ENCODE measurements at regions of chrX and their contacts with region 1.

Region 1: DNA sequence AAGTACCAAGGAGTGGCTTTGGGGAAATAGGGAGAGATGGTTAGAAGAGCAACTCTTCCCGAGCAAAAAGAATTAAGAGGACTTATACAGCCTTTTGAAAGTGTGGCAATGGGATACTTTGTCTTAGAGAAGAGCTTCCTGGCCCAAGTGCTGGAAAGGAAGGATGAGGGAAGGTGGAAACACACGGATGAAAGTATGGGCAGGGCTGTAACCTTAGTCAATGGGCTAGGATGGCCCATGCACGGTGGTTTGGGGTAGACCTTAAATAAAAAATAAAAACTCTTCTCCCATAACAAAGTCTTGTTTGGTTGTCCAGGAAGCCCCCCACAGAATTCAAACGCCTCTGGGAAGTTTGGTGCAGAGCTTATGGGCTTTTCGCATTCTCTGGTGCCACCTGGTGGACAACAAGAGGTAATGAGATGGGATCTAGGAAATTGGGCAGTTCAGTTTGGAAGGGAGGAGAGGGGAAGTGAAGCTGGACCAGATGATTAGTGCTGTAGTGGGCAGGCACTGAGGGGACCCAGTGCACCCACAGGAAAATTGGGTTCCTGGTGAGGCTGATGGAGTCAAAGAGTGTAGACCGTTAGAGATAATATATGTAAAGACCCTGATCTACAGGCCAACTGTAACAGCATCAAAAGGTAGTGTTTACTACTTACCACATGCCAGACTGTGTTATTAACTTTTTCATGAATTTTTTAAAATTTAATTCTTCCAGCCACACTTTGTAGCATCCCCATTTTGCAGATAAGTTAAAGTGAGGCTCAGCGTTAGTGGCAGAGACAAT is 13.8 kb upstream of the ENOX2 start:
- DNase-seq: no peak
- ATAC-seq: peak; percentile 89
- H3K4me3 ChIP-seq: no peak overlapping the region
- H3K27ac ChIP-seq: no peak overlapping the region
- H3K4me1 ChIP-seq: no peaks in the 10 kb centered on the region
- H3K27me3 ChIP-seq: no peaks in the 10 kb centered on the region
- CTCF ChIP-seq: peak; percentile 68 to 79 (median 78)
- EP300 ChIP-seq: no peak
- POLR2A ChIP-seq: no peak
- RAD21 ChIP-seq: peak; percentile 99

Region 2: DNA sequence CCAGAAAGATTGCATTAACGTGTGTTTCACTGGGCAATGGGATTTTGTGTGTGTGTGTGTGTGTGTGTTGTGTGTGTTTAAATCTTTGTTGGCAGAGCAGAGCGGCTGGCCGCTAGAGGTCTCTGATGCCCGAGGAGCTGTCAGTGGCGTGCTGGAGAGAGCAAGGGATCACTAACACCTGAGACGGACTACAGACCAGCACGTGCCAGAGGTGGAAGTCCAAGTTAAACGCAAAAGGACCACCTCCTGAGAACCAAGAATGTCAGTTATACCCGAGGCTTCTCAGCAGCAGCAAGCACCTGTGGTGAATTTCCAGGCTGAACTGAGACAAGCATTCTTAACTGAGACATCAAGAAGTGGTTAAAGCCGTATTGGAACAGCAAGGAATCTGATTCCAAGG is 586.1 kb before region 1 on chrX:
- CTCF ChIA-PET with region 1: interaction called, 5 read pairs
- POLR2A ChIA-PET with region 1: no interaction called
- RAD21 ChIA-PET with region 1: interaction called, 3 read pairs
- SMC1A ChIA-PET with region 1: interaction called, 3 read pairs
- in situ Hi-C with region 1: loop called (anchors 5 kb)
- intact Hi-C with region 1: loop called (anchors 1 kb)
- DNase-seq: peak; percentile 5
- ATAC-seq: peak; percentile 95
- H3K4me3 ChIP-seq: no peak overlapping the region
- H3K27ac ChIP-seq: no peak overlapping the region
- H3K4me1 ChIP-seq: no peaks in the 10 kb centered on the region
- H3K27me3 ChIP-seq: no peaks in the 10 kb centered on the region
- CTCF ChIP-seq: peak; percentile 65 to 68 (median 66)
- EP300 ChIP-seq: no peak
- POLR2A ChIP-seq: no peak
- RAD21 ChIP-seq: peak; percentile 64

Region 3: GRCh38 chrX:130393451-130394074 is 523.3 kb before region 1 on chrX:
- CTCF ChIA-PET with region 1: interaction called, 3 read pairs
- POLR2A ChIA-PET with region 1: no interaction called
- RAD21 ChIA-PET with region 1: interaction called, 3 read pairs
- SMC1A ChIA-PET with region 1: interaction called, 3 read pairs
- in situ Hi-C with region 1: no loop called
- intact Hi-C with region 1: loop called (anchors 2 kb)
- DNase-seq: no peak
- ATAC-seq: peak; percentile 28; the same call in 1 of the 3 replicates
- H3K4me3 ChIP-seq: no peak overlapping the region
- H3K27ac ChIP-seq: no peak overlapping the region
- H3K4me1 ChIP-seq: no peaks in the 10 kb centered on the region
- H3K27me3 ChIP-seq: 0 out of 4 replicates have a peak, but pooled peaks cover 0 to 2% of the 10 kb centered on the region in 2 experiments
- CTCF ChIP-seq: peak; percentile 52 to 54 (median 53); a peak in 5 of 6 replicates
- EP300 ChIP-seq: no peak
- POLR2A ChIP-seq: no peak
- RAD21 ChIP-seq: peak; percentile 31; the same call in 1 of the 2 replicates

Region 4: DNA sequence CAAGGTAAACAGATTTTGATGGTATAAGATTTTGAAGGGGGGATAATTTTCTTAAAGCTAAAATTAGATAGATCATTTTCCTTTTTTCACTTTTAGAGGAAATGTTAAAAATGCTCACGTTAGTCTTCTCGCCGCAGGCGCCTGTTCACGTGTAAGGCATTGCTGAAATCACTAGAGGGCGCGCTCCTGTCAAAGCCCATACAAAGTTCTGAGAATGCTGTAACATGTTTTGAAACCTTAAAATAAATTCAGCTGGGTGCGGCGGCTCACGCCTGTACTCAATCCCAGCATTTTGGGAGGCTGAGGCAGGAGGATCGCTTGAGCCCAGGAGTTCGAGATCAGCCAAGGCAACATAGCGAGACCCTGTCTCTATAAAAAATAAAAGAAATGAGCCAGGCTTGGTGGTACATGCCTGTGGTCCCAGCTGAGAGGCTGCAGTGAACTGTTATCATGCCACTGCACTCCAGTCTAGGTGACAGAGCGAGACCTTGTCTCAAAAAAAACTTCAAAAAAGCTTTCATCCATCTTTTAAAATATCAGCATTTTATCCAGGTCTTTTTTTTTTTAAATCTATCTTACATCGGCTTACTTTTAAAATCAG is 377.0 kb before region 1 on chrX:
- CTCF ChIA-PET with region 1: interaction called, 25 read pairs
- POLR2A ChIA-PET with region 1: no interaction called
- RAD21 ChIA-PET with region 1: interaction called, 4 read pairs
- SMC1A ChIA-PET with region 1: interaction called, 47 read pairs
- in situ Hi-C with region 1: loop called (anchors 5 kb)
- intact Hi-C with region 1: loop called (anchors 1 kb)
- DNase-seq: no peak
- ATAC-seq: peak; percentile 85
- H3K4me3 ChIP-seq: no peak overlapping the region
- H3K27ac ChIP-seq: no peak overlapping the region
- H3K4me1 ChIP-seq: no peaks in the 10 kb centered on the region
- H3K27me3 ChIP-seq: no peaks in the 10 kb centered on the region; a peak in 1 of 4 replicates
- CTCF ChIP-seq: peak; percentile 74 to 77 (median 75)
- EP300 ChIP-seq: no peak
- POLR2A ChIP-seq: no peak
- RAD21 ChIP-seq: peak; percentile 67

Region 5: DNA sequence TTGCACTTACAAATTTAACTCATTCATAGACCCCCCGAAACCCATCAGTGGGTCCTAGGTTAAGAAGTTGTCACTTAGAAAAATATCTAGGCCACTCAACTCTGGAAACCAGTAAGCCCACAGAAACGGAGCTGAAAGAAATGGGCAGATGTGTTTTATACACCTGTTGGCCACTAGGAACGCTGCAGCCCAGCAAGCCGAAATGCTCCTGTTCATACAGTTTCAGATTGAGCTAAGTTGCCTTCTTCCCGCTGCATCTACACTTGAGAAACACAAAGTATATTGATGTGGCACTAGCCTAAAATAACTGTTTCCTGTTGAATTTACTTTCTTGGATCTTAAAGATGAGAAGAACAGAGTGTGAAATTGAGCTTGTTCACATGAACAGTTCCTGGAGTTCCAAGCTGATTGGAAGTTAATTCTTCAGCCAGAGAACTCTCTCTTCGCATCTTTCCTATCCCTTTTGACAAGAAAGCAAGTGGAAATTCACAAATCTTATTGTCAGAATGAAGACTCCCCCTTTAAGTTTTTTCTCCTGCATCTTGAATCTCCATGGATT is 340.9 kb before region 1 on chrX:
- CTCF ChIA-PET with region 1: interaction called, 39 read pairs
- POLR2A ChIA-PET with region 1: no interaction called
- RAD21 ChIA-PET with region 1: interaction called, 26 read pairs
- SMC1A ChIA-PET with region 1: interaction called, 16 read pairs
- in situ Hi-C with region 1: no loop called
- intact Hi-C with region 1: loop called (anchors 2 kb)
- DNase-seq: no peak
- ATAC-seq: peak; percentile 88
- H3K4me3 ChIP-seq: no peak overlapping the region
- H3K27ac ChIP-seq: no peak overlapping the region
- H3K4me1 ChIP-seq: no peaks in the 10 kb centered on the region
- H3K27me3 ChIP-seq: peaks cover 0 to 3% of the 10 kb centered on the region in 2 experiments; a peak in 1 of 4 replicates
- CTCF ChIP-seq: peak; percentile 80 to 92 (median 90)
- EP300 ChIP-seq: no peak
- POLR2A ChIP-seq: no peak
- RAD21 ChIP-seq: peak; percentile 72

Region 6: DNA sequence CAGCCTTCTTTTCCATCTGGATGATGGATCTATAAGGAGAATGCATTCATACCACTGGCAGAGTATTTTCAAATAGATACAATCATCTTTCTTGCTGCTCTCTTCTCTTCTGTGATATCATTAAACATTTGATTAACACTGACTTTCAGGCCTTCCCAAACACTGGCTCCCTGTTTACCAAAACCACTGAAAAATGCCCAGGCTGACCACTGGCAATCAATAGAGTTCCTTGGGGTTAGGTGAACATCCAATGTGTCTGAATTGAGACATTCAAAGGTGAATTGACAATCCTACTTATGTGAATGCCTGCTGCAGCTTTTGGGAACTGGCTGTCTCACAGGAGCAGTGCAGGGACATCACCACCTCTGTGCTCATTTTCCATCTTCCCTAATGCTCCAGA is 182.1 kb before region 1 on chrX:
- CTCF ChIA-PET with region 1: no interaction called
- POLR2A ChIA-PET with region 1: no interaction called
- RAD21 ChIA-PET with region 1: no interaction called
- SMC1A ChIA-PET with region 1: no interaction called
- in situ Hi-C with region 1: no loop called
- intact Hi-C with region 1: loop called (anchors 5 kb)
- DNase-seq: no peak
- ATAC-seq: no peak
- H3K4me3 ChIP-seq: no peak overlapping the region
- H3K27ac ChIP-seq: no peak overlapping the region
- H3K4me1 ChIP-seq: no peaks in the 10 kb centered on the region
- H3K27me3 ChIP-seq: no peaks in the 10 kb centered on the region
- CTCF ChIP-seq: no peak
- EP300 ChIP-seq: no peak
- POLR2A ChIP-seq: no peak
- RAD21 ChIP-seq: no peak

Region 7: GRCh38 chrX:130848763-130849162 is 68.1 kb before region 1 on chrX:
- CTCF ChIA-PET with region 1: no interaction called
- POLR2A ChIA-PET with region 1: no interaction called
- RAD21 ChIA-PET with region 1: no interaction called
- SMC1A ChIA-PET with region 1: no interaction called
- in situ Hi-C with region 1: no loop called
- intact Hi-C with region 1: no loop called
- DNase-seq: no peak
- ATAC-seq: peak; percentile 81
- H3K4me3 ChIP-seq: peak overlapping the region; percentile 35; the same call in 1 of the 2 replicates
- H3K27ac ChIP-seq: no peak overlapping the region
- H3K4me1 ChIP-seq: peaks cover 6% of the 10 kb centered on the region
- H3K27me3 ChIP-seq: no peaks in the 10 kb centered on the region
- CTCF ChIP-seq: no peak
- EP300 ChIP-seq: no peak
- POLR2A ChIP-seq: no peak
- RAD21 ChIP-seq: no peak

Region 8: GRCh38 chrX:130887376-130887775 is 29.5 kb before region 1 on chrX:
- CTCF ChIA-PET with region 1: interaction called, 11 read pairs
- POLR2A ChIA-PET with region 1: no interaction called
- RAD21 ChIA-PET with region 1: no interaction called
- SMC1A ChIA-PET with region 1: interaction called, 4 read pairs
- in situ Hi-C with region 1: no loop called
- intact Hi-C with region 1: no loop called
- DNase-seq: no peak
- ATAC-seq: no peak
- H3K4me3 ChIP-seq: no peak overlapping the region
- H3K27ac ChIP-seq: no peak overlapping the region
- H3K4me1 ChIP-seq: no peaks in the 10 kb centered on the region
- H3K27me3 ChIP-seq: no peaks in the 10 kb centered on the region
- CTCF ChIP-seq: no peak
- EP300 ChIP-seq: no peak
- POLR2A ChIP-seq: no peak
- RAD21 ChIP-seq: no peak

Region 9: GRCh38 chrX:131741103-131741581 is 824.3 kb after region 1 on chrX:
- CTCF ChIA-PET with region 1: no interaction called
- POLR2A ChIA-PET with region 1: no interaction called
- RAD21 ChIA-PET with region 1: no interaction called
- SMC1A ChIA-PET with region 1: no interaction called
- in situ Hi-C with region 1: no loop called
- intact Hi-C with region 1: no loop called
- DNase-seq: peak; percentile 87
- ATAC-seq: peak; percentile 83
- H3K4me3 ChIP-seq: peak overlapping the region; percentile 63
- H3K27ac ChIP-seq: peak overlapping the region; percentile 95
- H3K4me1 ChIP-seq: no peaks in the 10 kb centered on the region
- H3K27me3 ChIP-seq: no peaks in the 10 kb centered on the region
- CTCF ChIP-seq: peak; percentile 22 to 54 (median 43); a peak in 5 of 6 replicates
- EP300 ChIP-seq: no peak
- POLR2A ChIP-seq: 0 out of 2 replicates have a peak, but pooled peaks have one; percentile 28
- RAD21 ChIP-seq: peak; percentile 64